Sciatic nerve (tissue), 2 donors: ENCODE measurements at regions of chr4 and their contacts with region 1.

Region 1: GRCh38 chr4:115028682-115029410 is 84.6 kb downstream of the NDST4 start:
- DNase-seq: no peak
- ATAC-seq: no peak

Region 2: GRCh38 chr4:114986133-114986532 is 42.7 kb before region 1 on chr4:
- intact Hi-C with region 1: loop called (anchors 1 kb)
- DNase-seq: no peak
- ATAC-seq: no peak